ENCODE measurements at regions of chr6 and their contacts with region 1.

Region 1: GRCh38 chr6:52410991-52411390 is 9.2 kb upstream of the EFHC1 start:
- DNase-seq: no peak
- ATAC-seq: no peak
- H3K4me3 ChIP-seq: no peak overlapping the region
- H3K27ac ChIP-seq: no peak overlapping the region
- H3K4me1 ChIP-seq: no peaks in the 10 kb centered on the region
- H3K27me3 ChIP-seq: no peaks in the 10 kb centered on the region
- CTCF ChIP-seq: no peak

Region 2: DNA sequence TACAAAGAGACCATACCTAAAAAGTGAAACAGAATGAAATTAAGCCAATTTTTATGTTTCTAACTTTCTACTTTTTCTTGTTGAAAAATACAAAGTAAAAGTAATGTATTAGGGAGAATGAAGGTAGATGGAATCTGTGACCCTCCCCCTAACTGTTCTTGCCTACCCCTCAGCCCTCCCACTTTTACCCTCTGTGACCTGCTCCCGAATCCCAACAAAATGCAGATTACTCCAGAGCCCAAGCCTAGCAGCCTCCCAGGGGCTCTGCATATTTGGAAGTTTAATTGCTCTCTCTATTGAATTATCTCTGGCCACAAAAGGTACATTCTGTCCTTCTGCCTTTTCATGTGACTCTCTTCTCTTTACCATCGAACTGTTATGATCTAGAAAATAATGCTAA is 525.0 kb before region 1 on chr6:
- intact Hi-C with region 1: no loop called
- DNase-seq: no peak
- ATAC-seq: no peak
- H3K4me3 ChIP-seq: no peak overlapping the region
- H3K27ac ChIP-seq: no peak overlapping the region
- H3K4me1 ChIP-seq: no peaks in the 10 kb centered on the region
- H3K27me3 ChIP-seq: no peaks in the 10 kb centered on the region
- CTCF ChIP-seq: no peak

Region 3: GRCh38 chr6:52664186-52664990 is 253.4 kb after region 1 on chr6:
- intact Hi-C with region 1: loop called (anchors 5 kb)
- DNase-seq: peak; percentile 91
- ATAC-seq: peak; percentile 97 to 99
- H3K4me3 ChIP-seq: peak overlapping the region; percentile 65
- H3K27ac ChIP-seq: peak overlapping the region; percentile 74
- H3K4me1 ChIP-seq: peaks cover 14% of the 10 kb centered on the region
- H3K27me3 ChIP-seq: no peaks in the 10 kb centered on the region
- CTCF ChIP-seq: no peak

Measured in lower lobe of right lung (tissue), 2 donors.